WTC11 (cell line): ENCODE measurements at regions of chr2 and their contacts with region 1.

Region 1: DNA sequence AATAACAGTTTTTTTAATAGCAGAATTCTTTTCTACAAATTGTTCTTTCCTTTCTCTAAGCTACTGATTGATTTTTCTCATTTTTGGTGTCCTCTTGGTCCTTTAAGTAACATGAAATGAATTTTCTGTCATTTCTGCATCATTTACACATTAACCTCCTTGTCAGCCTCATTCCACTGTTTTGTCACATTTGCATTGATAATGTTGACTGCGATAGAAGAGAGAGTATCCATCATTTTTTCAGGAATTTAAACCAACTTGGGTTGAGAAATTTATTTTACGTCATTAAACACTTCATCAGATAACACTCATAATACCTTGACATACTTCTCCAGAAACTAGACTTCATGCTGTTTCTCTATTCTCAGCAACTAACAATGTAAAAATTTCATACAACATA is 422.2 kb downstream of the LRRTM4 start:
- DNase-seq: no peak
- ATAC-seq: no peak
- H3K4me3 Mint-ChIP-seq: peak overlapping the region; percentile 21
- H3K27ac Mint-ChIP-seq: peak overlapping the region; percentile 63; the same call in 1 of the 2 replicates
- H3K4me1 Mint-ChIP-seq: peaks cover 70% of the 10 kb centered on the region
- H3K27me3 Mint-ChIP-seq: no peaks in the 10 kb centered on the region
- CTCF ChIP-seq: no peak

Region 2: GRCh38 chr2:76953733-76954347 is 146.1 kb before region 1 on chr2:
- CTCF ChIA-PET with region 1: interaction called, 10 read pairs
- POLR2A ChIA-PET with region 1: no interaction called
- DNase-seq: peak; percentile 36
- ATAC-seq: peak; percentile 99
- H3K4me3 Mint-ChIP-seq: no peak overlapping the region; the same call in 1 of the 2 replicates
- H3K27ac Mint-ChIP-seq: no peak overlapping the region
- H3K4me1 Mint-ChIP-seq: peaks cover 35% of the 10 kb centered on the region
- H3K27me3 Mint-ChIP-seq: no peaks in the 10 kb centered on the region
- CTCF ChIP-seq: peak; percentile 86

Region 3: DNA sequence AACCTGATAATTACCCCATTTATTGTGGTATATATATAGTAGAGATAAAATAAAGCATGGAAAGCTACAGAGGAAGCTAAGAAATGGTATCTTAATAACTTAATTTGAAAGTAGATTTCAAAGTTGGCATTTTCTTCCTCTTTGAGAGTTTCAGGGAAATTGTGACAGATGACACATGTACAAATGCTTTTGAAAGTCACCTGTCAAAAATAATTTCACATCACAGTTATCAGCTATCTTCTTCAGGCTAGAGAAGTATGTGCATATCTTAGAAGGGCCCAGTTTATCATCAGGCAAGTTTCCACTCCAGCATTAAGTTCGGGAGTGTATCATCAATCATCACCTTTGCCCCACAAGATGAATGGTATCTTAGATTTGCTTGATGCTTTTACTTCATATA is 35.6 kb before region 1 on chr2:
- CTCF ChIA-PET with region 1: no interaction called
- POLR2A ChIA-PET with region 1: no interaction called
- DNase-seq: no peak
- ATAC-seq: no peak
- H3K4me3 Mint-ChIP-seq: no peak overlapping the region
- H3K27ac Mint-ChIP-seq: no peak overlapping the region
- H3K4me1 Mint-ChIP-seq: peaks cover 5% of the 10 kb centered on the region
- H3K27me3 Mint-ChIP-seq: no peaks in the 10 kb centered on the region
- CTCF ChIP-seq: no peak